Cardiac septum (tissue), 1 donor: ENCODE measurements at regions of chr6 and their contacts with region 1.

Region 1: DNA sequence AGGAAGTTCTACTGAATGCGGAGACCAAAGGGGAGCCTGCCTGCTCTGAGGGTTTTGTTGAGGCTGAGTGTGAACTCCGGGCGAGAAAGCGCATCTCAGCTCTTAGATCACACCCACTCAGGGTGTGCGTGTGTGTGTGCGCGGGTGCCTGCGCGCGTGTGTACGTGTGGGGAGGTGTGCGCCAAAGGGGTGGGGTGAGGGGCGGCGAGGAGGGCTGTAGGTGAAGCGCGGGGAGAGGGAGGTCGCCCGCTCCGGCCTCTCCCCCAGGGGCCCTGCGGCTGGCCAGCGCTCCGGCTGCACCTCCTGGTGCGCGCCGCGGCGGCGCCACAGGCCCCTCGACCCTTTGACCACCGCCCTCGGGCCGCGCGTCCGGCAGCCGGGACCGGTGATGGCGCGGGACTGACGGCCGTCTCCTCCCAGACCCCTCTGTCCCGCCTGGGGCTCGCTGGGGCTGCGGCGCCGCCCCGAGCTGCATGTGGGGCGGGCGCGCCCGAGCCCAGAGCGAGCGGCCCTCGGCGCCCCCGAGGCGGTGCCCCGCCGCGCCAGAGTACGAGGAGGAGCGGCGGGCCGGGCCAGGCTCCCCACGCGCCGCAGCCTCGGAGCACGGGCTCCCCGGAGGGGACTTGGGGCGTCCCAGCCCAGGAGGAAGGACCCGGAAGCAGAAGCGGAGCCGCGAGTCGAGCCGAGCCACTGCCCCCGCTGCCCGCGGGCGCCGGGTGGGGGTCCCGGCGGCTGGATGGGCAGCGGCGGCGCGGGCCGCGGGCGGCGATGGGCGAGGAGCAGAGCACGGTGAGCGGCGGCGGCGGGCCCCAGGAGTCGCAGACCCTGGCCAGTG is at the start of gene RNF217:
- DNase-seq: peak; percentile 88
- total RNA-seq, gene RNF217: 28.1 TPM

Region 2: DNA sequence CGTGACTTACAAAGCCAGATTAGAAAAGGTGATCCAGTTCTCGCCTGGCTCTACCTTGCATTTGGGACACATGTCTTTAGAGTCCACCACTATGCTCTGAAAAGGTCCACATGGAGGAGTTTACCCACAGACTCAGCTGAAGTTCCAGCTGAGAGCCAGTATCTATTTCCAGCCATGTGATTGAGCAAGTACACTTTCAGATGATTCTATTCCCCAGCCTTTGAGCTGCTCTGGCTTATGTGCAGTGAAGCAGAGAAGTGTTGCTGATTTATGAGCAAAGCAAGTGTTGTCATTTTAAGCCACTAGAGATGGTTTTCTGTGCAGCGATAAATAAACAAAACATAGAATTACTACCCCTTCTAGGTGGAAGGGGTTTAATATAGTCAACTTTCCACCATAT is 520.5 kb before region 1 on chr6:
- intact Hi-C with region 1: no loop called
- DNase-seq: no peak

Region 3: DNA sequence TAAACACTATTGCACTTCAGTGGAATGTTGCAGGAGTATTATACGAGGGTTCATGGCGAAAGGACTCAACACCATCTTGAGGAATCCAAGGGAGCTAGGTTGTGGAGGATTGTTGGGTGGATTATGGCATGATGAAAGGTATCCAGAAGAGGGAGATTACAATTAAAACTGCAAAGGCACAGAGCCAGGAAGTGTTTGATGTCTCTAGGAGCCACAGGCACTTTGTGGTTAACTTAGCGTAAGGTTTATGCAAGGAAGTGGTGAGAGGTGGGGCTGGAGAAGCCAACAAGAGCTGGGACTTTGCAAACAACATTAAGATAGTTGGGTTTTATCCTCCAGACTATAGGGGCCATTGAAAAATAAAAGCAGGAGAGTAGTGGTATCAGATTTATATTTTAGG is 105.0 kb after region 1 on chr6:
- intact Hi-C with region 1: no loop called
- DNase-seq: no peak

Region 4: GRCh38 chr6:125099211-125100073 is 137.4 kb after region 1 on chr6:
- intact Hi-C with region 1: loop called (anchors 5 kb)
- DNase-seq: peak; percentile 87

Region 5: GRCh38 chr6:125191916-125192609 is 230.1 kb after region 1 on chr6:
- intact Hi-C with region 1: loop called (anchors 10 kb)
- DNase-seq: no peak